ENCODE measurements at regions of chrX and their contacts with region 1.

Region 1: DNA sequence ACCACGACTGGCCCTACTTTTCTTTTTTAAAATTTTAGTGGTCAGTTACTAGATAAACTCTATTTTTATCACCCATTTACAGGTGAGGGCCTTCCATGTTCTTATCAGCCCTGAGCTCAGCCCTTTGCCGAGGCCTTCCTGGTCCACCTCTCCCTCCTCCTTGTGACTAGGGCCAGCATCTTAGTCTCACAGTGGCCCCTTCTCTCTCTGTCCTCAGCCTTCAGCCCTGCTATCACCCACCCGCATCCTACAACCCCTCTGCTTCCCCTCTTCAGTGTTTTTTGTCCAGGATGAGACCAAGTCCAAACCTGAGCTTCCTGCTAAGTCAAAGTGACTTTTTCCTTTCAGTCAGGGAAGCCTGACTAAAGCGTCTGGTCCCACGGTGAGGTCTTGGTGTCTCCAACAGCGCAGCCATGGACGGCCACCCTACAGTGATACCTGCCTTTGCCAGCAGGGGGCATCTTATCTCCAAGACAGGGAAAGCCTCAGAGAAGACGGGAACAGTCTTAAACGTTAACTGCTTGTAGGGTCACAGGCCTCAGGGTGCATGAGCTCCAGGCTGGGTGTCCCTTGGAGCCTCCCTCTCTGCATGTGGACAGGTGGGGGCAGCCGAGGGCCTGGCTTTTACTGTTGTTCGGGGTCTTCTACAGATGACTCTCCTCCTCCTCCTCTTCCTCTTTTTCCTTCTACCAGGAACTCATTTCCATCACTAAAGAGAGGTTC is 11.7 kb upstream of the GAGE10 start:
- DNase-seq: peak; percentile 39
- H3K4me3 ChIP-seq: no peak overlapping the region
- H3K27ac ChIP-seq: no peak overlapping the region
- H3K4me1 ChIP-seq: no peaks in the 10 kb centered on the region
- H3K27me3 ChIP-seq: no peaks in the 10 kb centered on the region
- CTCF ChIP-seq: peak; percentile 60 to 68
- POLR2A ChIP-seq: no peak

Region 2: GRCh38 chrX:48911412-48912182 is 380.2 kb before region 1 on chrX and contains the start of gene SLC35A2:
- CTCF ChIA-PET with region 1: no interaction called
- POLR2A ChIA-PET with region 1: no interaction called
- dilution Hi-C with region 1: no loop called
- intact Hi-C with region 1: no loop called
- DNase-seq: peak; percentile 75
- H3K4me3 ChIP-seq: peak within 1 kb of the TSS; percentile 45 to 92 (median 78)
- H3K27ac ChIP-seq: peak within 1 kb of the TSS; percentile 49
- H3K4me1 ChIP-seq: peaks cover 9% of the 10 kb centered on the region
- H3K27me3 ChIP-seq: no peaks in the 10 kb centered on the region
- CTCF ChIP-seq: no peak
- POLR2A ChIP-seq: peak; percentile 59
- total RNA-seq, gene SLC35A2: 28.9 and 31.4 TPM in 2 replicates

Region 3: GRCh38 chrX:49242545-49243066 is 49.2 kb before region 1 on chrX:
- CTCF ChIA-PET with region 1: no interaction called
- POLR2A ChIA-PET with region 1: no interaction called
- dilution Hi-C with region 1: no loop called
- intact Hi-C with region 1: no loop called
- DNase-seq: no peak
- H3K4me3 ChIP-seq: no peak overlapping the region
- H3K27ac ChIP-seq: no peak overlapping the region
- H3K4me1 ChIP-seq: peaks cover 3% of the 10 kb centered on the region
- H3K27me3 ChIP-seq: no peaks in the 10 kb centered on the region
- CTCF ChIP-seq: no peak
- POLR2A ChIP-seq: no peak

Region 4: GRCh38 chrX:49754233-49754857 is 462.6 kb after region 1 on chrX:
- CTCF ChIA-PET with region 1: no interaction called
- POLR2A ChIA-PET with region 1: no interaction called
- dilution Hi-C with region 1: no loop called
- intact Hi-C with region 1: loop called (anchors 1 kb)
- DNase-seq: peak; percentile 32
- H3K4me3 ChIP-seq: no peak overlapping the region
- H3K27ac ChIP-seq: no peak overlapping the region
- H3K4me1 ChIP-seq: no peaks in the 10 kb centered on the region
- H3K27me3 ChIP-seq: peaks cover 0 to 3% of the 10 kb centered on the region in 2 experiments
- CTCF ChIP-seq: peak; percentile 59 to 71
- POLR2A ChIP-seq: no peak

Measured in endothelial cell of umbilical vein (primary cell).